IMR-90 (cell line): ENCODE measurements at regions of chr3 and their contacts with region 1.

Region 1: GRCh38 chr3:142839831-142840230 is 49.1 kb downstream of the PCOLCE2 start:
- DNase-seq: no peak
- ATAC-seq: no peak
- H3K4me3 ChIP-seq: no peak overlapping the region
- H3K27ac ChIP-seq: no peak overlapping the region
- H3K4me1 ChIP-seq: no peaks in the 10 kb centered on the region
- H3K27me3 ChIP-seq: peaks cover 9% of the 10 kb centered on the region
- CTCF ChIP-seq: no peak
- POLR2A ChIP-seq: no peak
- RAD21 ChIP-seq: no peak

Region 2: DNA sequence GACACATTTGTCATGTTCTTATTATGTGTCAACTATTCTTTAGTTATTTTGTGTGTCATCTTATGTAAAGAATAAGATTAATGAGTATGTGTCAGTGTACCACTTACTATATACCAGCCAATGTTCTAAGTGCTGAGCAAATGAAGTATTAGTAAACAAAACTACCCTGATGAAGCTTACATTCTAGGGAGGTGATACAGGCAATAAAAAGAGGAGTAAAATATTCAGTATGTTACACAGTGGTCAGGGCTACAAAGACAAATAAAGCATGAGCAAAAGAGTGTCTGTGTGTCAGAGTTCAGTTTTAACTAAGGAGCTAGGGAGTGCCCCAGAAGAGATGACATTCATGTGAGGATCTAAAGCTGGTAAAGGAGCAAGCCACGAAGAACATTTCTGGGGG is 36.9 kb before region 1 on chr3:
- CTCF ChIA-PET with region 1: no interaction called
- POLR2A ChIA-PET with region 1: no interaction called
- dilution Hi-C with region 1: no loop called
- in situ Hi-C with region 1: no loop called
- intact Hi-C with region 1: no loop called
- DNase-seq: no peak
- ATAC-seq: no peak
- H3K4me3 ChIP-seq: no peak overlapping the region
- H3K27ac ChIP-seq: no peak overlapping the region
- H3K4me1 ChIP-seq: no peaks in the 10 kb centered on the region
- H3K27me3 ChIP-seq: no peaks in the 10 kb centered on the region
- CTCF ChIP-seq: no peak
- POLR2A ChIP-seq: no peak
- RAD21 ChIP-seq: no peak

Region 3: GRCh38 chr3:142884531-142884930 is 44.7 kb after region 1 on chr3:
- CTCF ChIA-PET with region 1: no interaction called
- POLR2A ChIA-PET with region 1: interaction called, 21 read pairs
- dilution Hi-C with region 1: no loop called
- in situ Hi-C with region 1: no loop called
- intact Hi-C with region 1: no loop called
- DNase-seq: no peak
- ATAC-seq: no peak
- H3K4me3 ChIP-seq: no peak overlapping the region
- H3K27ac ChIP-seq: no peak overlapping the region
- H3K4me1 ChIP-seq: no peaks in the 10 kb centered on the region
- H3K27me3 ChIP-seq: peaks cover 19% of the 10 kb centered on the region
- CTCF ChIP-seq: no peak
- POLR2A ChIP-seq: no peak
- RAD21 ChIP-seq: no peak